HCT116 (cell line): ENCODE measurements at regions of chr2 and their contacts with region 1.

Region 1: GRCh38 chr2:25437881-25438662 is 96.3 kb upstream of the DNMT3A start:
- DNase-seq: no peak
- ATAC-seq: no peak
- H3K4me3 ChIP-seq: no peak overlapping the region
- H3K27ac ChIP-seq: no peak overlapping the region
- H3K4me1 ChIP-seq: no peaks in the 10 kb centered on the region
- H3K27me3 ChIP-seq: no peaks in the 10 kb centered on the region
- CTCF ChIP-seq: no peak
- POLR2A ChIP-seq: no peak
- RAD21 ChIP-seq: no peak

Region 2: GRCh38 chr2:25453199-25453905 is 15.3 kb after region 1 on chr2:
- CTCF ChIA-PET with region 1: no interaction called
- POLR2A ChIA-PET with region 1: no interaction called
- RAD21 ChIA-PET with region 1: no interaction called
- intact Hi-C with region 1: loop called (anchors 1 kb)
- DNase-seq: no peak
- ATAC-seq: no peak
- H3K4me3 ChIP-seq: no peak overlapping the region
- H3K27ac ChIP-seq: no peak overlapping the region
- H3K4me1 ChIP-seq: no peaks in the 10 kb centered on the region
- H3K27me3 ChIP-seq: no peaks in the 10 kb centered on the region
- CTCF ChIP-seq: no peak
- POLR2A ChIP-seq: no peak
- RAD21 ChIP-seq: no peak